Endothelial cell of umbilical vein (primary cell): ENCODE measurements at regions of chr14 and their contacts with region 1.

Region 1: DNA sequence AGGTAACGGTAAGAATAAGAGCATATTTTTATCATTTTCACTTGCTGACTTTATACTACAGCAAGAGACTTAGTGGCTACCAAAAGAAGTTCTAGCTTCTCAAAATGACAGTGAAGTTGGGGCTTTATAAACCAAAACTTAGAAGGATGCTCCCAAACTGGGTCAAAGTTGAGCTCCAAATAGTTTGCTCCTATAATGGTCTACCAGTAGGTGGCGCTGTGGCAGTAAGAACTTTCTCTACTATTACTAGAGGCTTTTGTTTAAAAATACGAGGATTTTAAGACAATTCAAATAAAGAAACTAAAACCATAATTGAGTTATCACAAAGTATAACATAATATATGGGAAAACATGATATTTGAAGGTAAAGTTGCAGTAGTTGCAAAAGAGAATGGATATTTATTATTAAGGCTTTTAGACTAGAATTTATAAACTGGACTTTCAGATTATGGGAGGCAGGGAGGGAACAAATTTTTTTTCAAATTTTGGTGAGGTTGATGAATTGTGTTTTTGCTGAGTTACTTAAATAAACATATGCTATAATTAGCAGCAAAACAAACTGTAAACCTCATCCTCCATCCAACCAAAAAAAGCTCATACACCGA is 75.0 kb downstream of the TGFB3 start:
- DNase-seq: peak; percentile 66
- H3K4me3 ChIP-seq: no peak overlapping the region
- H3K27ac ChIP-seq: no peak overlapping the region
- H3K4me1 ChIP-seq: peaks cover 3% of the 10 kb centered on the region
- H3K27me3 ChIP-seq: no peaks in the 10 kb centered on the region
- CTCF ChIP-seq: peak; percentile 67 to 73
- POLR2A ChIP-seq: no peak

Region 2: DNA sequence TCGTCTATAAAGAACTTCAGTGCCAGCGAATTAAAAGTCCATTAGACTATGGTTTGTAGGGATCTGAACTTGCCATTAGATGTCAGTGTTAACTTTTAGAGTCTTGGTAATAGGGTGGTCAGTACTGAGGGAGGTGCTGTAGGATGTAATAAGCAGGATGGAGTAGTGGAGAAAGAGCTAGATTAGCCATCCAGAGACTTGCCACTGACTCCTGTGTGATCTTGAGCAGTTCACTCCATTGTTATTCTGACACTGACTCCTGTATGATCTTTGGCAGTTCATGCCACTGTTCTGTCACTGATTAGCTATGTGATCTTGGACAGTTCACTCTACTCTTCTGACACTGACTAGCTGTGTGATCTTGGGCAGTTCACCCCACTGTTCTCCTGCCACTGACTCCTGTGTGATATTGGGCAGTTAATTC is 112.2 kb before region 1 on chr14:
- CTCF ChIA-PET with region 1: interaction called, 52 read pairs
- POLR2A ChIA-PET with region 1: no interaction called
- dilution Hi-C with region 1: no loop called
- intact Hi-C with region 1: no loop called
- DNase-seq: peak; percentile 49
- H3K4me3 ChIP-seq: no peak overlapping the region
- H3K27ac ChIP-seq: no peak overlapping the region
- H3K4me1 ChIP-seq: no peaks in the 10 kb centered on the region
- H3K27me3 ChIP-seq: no peaks in the 10 kb centered on the region
- CTCF ChIP-seq: peak in 1 of 2 donors; percentile 31
- POLR2A ChIP-seq: no peak

Region 3: GRCh38 chr14:75851574-75851866 is 55.3 kb before region 1 on chr14:
- CTCF ChIA-PET with region 1: interaction called, 10 read pairs
- POLR2A ChIA-PET with region 1: no interaction called
- dilution Hi-C with region 1: no loop called
- intact Hi-C with region 1: no loop called
- DNase-seq: no peak
- H3K4me3 ChIP-seq: no peak overlapping the region
- H3K27ac ChIP-seq: no peak overlapping the region
- H3K4me1 ChIP-seq: no peaks in the 10 kb centered on the region
- H3K27me3 ChIP-seq: no peaks in the 10 kb centered on the region
- CTCF ChIP-seq: no peak
- POLR2A ChIP-seq: no peak

Region 4: GRCh38 chr14:75879031-75879430 is 27.7 kb before region 1 on chr14:
- CTCF ChIA-PET with region 1: interaction called, 23 read pairs
- POLR2A ChIA-PET with region 1: no interaction called
- dilution Hi-C with region 1: no loop called
- intact Hi-C with region 1: no loop called
- DNase-seq: peak; percentile 95
- H3K4me3 ChIP-seq: no peak overlapping the region
- H3K27ac ChIP-seq: peak overlapping the region; percentile 95
- H3K4me1 ChIP-seq: peaks cover 23% of the 10 kb centered on the region
- H3K27me3 ChIP-seq: no peaks in the 10 kb centered on the region
- CTCF ChIP-seq: no peak
- POLR2A ChIP-seq: peak; percentile 59

Region 5: GRCh38 chr14:75917322-75917945 is 10.7 kb after region 1 on chr14:
- CTCF ChIA-PET with region 1: interaction called, 51 read pairs
- POLR2A ChIA-PET with region 1: no interaction called
- dilution Hi-C with region 1: no loop called
- intact Hi-C with region 1: no loop called
- DNase-seq: no peak
- H3K4me3 ChIP-seq: no peak overlapping the region
- H3K27ac ChIP-seq: no peak overlapping the region
- H3K4me1 ChIP-seq: no peaks in the 10 kb centered on the region
- H3K27me3 ChIP-seq: no peaks in the 10 kb centered on the region
- CTCF ChIP-seq: no peak
- POLR2A ChIP-seq: no peak

Region 6: GRCh38 chr14:75941030-75941429 is 34.3 kb after region 1 on chr14:
- CTCF ChIA-PET with region 1: interaction called, 37 read pairs
- POLR2A ChIA-PET with region 1: no interaction called
- dilution Hi-C with region 1: no loop called
- intact Hi-C with region 1: no loop called
- DNase-seq: peak; percentile 39
- H3K4me3 ChIP-seq: no peak overlapping the region
- H3K27ac ChIP-seq: no peak overlapping the region
- H3K4me1 ChIP-seq: no peaks in the 10 kb centered on the region
- H3K27me3 ChIP-seq: no peaks in the 10 kb centered on the region
- CTCF ChIP-seq: no peak
- POLR2A ChIP-seq: no peak

Region 7: GRCh38 chr14:76050797-76051392 is 144.1 kb after region 1 on chr14:
- CTCF ChIA-PET with region 1: interaction called, 10 read pairs
- POLR2A ChIA-PET with region 1: no interaction called
- dilution Hi-C with region 1: no loop called
- intact Hi-C with region 1: no loop called
- DNase-seq: peak; percentile 72
- H3K4me3 ChIP-seq: no peak overlapping the region
- H3K27ac ChIP-seq: no peak overlapping the region
- H3K4me1 ChIP-seq: no peaks in the 10 kb centered on the region
- H3K27me3 ChIP-seq: no peaks in the 10 kb centered on the region
- CTCF ChIP-seq: peak; percentile 51 to 69
- POLR2A ChIP-seq: no peak